Activated naive CD4-positive, alpha-beta T cell treated with anti-CD3 and anti-CD28 coated beads, Interleukin-2, amount 10 ng/mL, durations not matched to agents 7 days and 5 days (primary cell): ENCODE measurements at regions of chr19 and their contacts with region 1.

Region 1: DNA sequence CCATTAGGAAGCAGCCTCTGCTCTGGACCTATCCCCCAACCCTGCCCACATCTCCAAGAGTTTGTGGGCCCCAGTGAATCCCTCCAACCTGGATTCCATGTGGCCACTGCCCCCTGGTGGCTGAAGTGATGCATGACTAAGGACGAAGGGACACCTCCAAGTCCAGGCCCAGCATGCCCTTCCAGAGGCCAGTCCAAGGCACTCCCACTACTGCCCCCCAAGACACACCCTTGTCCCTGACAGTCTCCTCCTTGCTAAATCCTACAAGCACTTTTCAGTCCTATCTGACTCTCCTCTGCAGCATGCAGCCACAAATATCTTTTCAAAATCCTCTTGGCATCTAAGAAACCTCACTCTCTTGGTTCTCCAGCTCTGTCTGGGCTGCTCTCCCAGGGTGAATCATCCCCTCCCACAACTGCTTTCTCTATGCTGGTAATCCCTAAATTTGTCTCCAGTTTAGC is 33.0 kb downstream of the DEDD2 start:
- DNase-seq: peak; percentile 78
- H3K4me3 Mint-ChIP-seq: no peak overlapping the region
- H3K27ac Mint-ChIP-seq: peak overlapping the region; percentile 60
- H3K4me1 Mint-ChIP-seq: peaks cover 52% of the 10 kb centered on the region
- H3K27me3 Mint-ChIP-seq: peaks cover 25% of the 10 kb centered on the region

Region 2: DNA sequence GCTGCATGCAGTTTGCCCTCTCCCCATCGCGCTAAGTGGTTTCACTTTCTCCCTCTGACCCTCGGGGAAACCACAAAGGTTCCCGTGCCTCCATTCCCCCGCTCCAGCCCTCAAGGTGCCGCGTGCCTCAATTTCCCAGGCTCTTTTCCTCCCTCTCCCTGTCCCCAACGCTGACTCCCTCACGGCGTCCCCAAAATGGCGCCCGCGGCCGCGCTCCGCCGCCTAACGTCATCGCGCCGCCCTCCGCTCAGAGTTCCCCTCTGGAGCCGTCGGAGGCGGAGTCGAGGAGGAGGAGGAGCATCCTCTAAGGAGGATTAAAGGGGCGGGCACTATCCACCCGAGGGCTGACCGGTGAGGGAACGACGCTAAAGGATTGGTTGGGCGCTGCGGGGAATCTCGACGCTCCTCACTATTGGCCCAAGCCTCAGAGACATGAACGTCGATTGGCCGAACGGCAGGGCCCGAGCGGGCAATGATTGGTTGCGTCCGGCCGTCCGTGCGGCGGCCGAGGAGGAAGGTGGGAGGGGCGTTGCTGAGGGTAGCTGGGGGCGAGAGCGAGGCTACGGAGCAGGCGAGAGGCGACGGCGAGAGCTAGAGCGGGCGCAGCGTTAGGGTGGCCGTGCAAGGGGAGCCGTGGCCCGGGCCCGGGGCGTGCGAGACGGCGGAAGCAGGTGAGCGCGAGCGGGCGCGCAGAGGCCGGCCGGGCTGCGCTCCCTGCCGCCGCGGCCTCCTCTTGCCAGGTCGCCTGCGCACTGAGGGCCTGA is 108.6 kb before region 1 on chr19 and contains the start of gene ZNF574:
- CTCF ChIA-PET with region 1: no interaction called
- DNase-seq: peak; percentile 99
- H3K4me3 Mint-ChIP-seq: peak within 1 kb of the TSS; percentile 94
- H3K27ac Mint-ChIP-seq: peak within 1 kb of the TSS; percentile 95
- H3K4me1 Mint-ChIP-seq: peaks cover 36% of the 10 kb centered on the region
- H3K27me3 Mint-ChIP-seq: peaks cover 5% of the 10 kb centered on the region

Region 3: GRCh38 chr19:42199440-42200115 is 15.1 kb after region 1 on chr19:
- CTCF ChIA-PET with region 1: interaction called, 34 read pairs
- DNase-seq: peak; percentile 91
- H3K4me3 Mint-ChIP-seq: peak overlapping the region; percentile 70
- H3K27ac Mint-ChIP-seq: peak overlapping the region; percentile 95
- H3K4me1 Mint-ChIP-seq: peaks cover 85% of the 10 kb centered on the region
- H3K27me3 Mint-ChIP-seq: no peaks in the 10 kb centered on the region

Region 4: DNA sequence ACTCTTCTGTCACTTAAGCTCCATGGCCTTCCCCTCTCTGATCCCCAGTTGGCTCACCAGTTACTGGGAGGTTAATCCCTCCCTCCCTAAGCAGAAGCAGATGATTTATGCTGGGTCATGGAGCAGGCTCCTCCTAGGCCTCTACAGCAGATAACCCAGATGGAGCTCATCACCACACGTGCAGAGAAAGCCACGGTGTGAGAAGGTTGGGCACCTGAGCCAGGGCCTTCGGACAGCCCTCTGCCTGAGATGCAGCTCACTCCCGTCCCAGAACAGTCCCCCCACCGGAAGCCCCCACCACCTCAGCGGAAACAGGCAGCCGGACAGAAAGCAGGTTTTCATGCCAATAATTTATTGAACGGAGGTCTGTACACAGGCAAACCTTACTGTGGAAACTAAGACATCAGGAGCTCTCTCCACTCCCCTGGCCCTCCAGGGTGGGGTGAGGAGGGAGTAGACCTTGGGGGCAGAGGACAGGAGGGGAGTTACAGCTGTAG is 45.5 kb after region 1 on chr19:
- CTCF ChIA-PET with region 1: no interaction called
- DNase-seq: no peak
- H3K4me3 Mint-ChIP-seq: no peak overlapping the region
- H3K27ac Mint-ChIP-seq: peak overlapping the region; percentile 38
- H3K4me1 Mint-ChIP-seq: peaks cover 15% of the 10 kb centered on the region
- H3K27me3 Mint-ChIP-seq: no peaks in the 10 kb centered on the region